Activated naive CD4-positive, alpha-beta T cell treated with anti-CD3 and anti-CD28 coated beads for 36 hours (primary cell): ENCODE measurements at regions of chr7 and their contacts with region 1.

Region 1: DNA sequence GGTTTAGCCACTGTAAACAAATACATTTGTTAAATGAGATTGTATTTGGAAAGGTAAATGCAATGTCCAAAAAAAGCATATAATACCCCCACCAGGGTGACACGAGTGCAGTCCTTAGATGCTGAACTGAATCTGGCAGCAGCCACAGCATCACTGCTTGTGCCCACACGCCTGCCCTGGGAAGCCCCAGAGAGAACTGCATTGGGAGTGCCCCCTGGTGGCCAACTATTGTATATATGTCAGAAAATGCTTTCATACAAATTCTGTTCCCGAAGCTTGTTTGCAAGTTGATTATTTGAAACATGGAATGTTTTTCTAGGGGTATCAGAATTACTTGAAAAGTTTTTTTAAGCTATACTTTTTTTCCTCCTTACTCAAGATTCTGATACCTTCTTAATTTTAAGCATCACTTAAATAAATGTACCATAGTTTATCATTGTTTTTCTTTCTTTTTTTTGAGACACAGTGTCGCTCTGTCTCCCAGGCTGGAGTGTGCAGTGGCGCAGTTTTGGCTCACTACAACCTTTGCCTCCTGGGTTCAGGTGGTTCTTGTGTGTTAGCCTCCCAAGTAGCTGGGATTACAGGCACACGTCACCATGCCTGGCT is 50.1 kb downstream of the LANCL2 start:
- DNase-seq: peak; percentile 92
- H3K4me3 Mint-ChIP-seq: no peak overlapping the region
- H3K27ac Mint-ChIP-seq: no peak overlapping the region
- H3K4me1 Mint-ChIP-seq: peaks cover 2% of the 10 kb centered on the region
- H3K27me3 Mint-ChIP-seq: no peaks in the 10 kb centered on the region

Region 2: GRCh38 chr7:55288070-55288824 is 127.0 kb before region 1 on chr7:
- CTCF ChIA-PET with region 1: interaction called, 11 read pairs
- intact Hi-C with region 1: loop called (anchors 2 kb)
- DNase-seq: no peak
- H3K4me3 Mint-ChIP-seq: no peak overlapping the region
- H3K27ac Mint-ChIP-seq: no peak overlapping the region
- H3K4me1 Mint-ChIP-seq: no peaks in the 10 kb centered on the region
- H3K27me3 Mint-ChIP-seq: peaks cover 10% of the 10 kb centered on the region

Region 3: GRCh38 chr7:55477781-55478374 is 62.6 kb after region 1 on chr7:
- CTCF ChIA-PET with region 1: no interaction called
- intact Hi-C with region 1: no loop called
- DNase-seq: no peak
- H3K4me3 Mint-ChIP-seq: no peak overlapping the region
- H3K27ac Mint-ChIP-seq: no peak overlapping the region
- H3K4me1 Mint-ChIP-seq: peaks cover 86% of the 10 kb centered on the region
- H3K27me3 Mint-ChIP-seq: no peaks in the 10 kb centered on the region